ENCODE measurements at regions of chr10 and their contacts with region 1.

Region 1: DNA sequence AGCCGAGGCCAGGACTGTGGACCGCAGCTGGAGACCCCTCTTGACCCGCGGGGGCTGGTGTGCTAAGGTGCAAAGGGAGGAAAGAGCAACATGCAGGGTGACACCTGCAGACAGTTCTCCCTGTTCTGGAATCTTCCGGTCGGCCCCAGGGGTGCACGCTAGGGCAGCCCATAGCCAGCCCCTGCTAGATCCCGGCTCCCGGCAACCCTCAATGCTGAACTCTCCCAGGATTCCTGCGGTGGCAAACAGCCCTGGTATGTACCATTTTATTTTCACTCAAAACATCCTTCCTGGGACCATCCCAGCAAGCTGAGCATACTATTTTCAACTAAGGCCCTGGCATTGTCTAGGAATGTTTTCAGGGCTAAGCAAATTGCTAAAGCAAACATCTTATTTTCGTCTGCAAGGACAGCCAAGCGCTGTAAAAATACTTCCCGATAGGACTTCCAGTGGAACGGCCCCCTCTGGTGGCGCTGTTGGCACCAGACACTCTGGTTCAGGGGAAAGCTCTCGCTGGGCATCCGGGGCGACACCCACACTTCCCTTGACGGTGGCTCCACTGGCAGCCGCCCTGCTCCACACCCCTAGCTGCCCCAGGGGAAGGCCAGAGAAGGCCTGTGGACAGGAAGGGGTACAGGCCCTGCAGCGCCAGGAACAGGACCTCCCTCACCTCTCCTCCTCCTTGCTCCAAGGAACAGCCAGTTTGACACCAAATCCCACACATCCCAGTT is 99.4 kb downstream of the CTBP2 start:
- DNase-seq: peak; percentile 84 to 91 (median 87)
- ATAC-seq: peak; percentile 39 to 71 (median 67)
- H3K4me3 ChIP-seq: peak overlapping the region in 8 of 12 donors; percentile 12 to 38 (median 25)
- H3K27ac ChIP-seq: peak overlapping the region; percentile 19 to 90 (median 70)
- H3K4me1 ChIP-seq: peaks cover 27 to 100% (median 98%) of the 10 kb centered on the region in 12 donors
- H3K27me3 ChIP-seq: no peaks in the 10 kb centered on the region
- CTCF ChIP-seq: peak; percentile 77 to 95 (median 88)
- POLR2A ChIP-seq: no peak

Region 2: GRCh38 chr10:124916585-124917427 is 144.2 kb before region 1 on chr10:
- intact Hi-C with region 1: loop called in 1 of 10 experiments (anchors 10 kb)
- DNase-seq: peak; percentile 99 to 100 (median 99)
- ATAC-seq: peak; percentile 98 to 99 (median 98)
- H3K4me3 ChIP-seq: peak overlapping the region; percentile 80 to 97 (median 88)
- H3K27ac ChIP-seq: peak overlapping the region; percentile 92 to 99 (median 96)
- H3K4me1 ChIP-seq: peaks cover 5 to 52% (median 40%) of the 10 kb centered on the region in 12 donors
- H3K27me3 ChIP-seq: no peaks in the 10 kb centered on the region
- CTCF ChIP-seq: peak in 1 of 12 donors; percentile 5
- POLR2A ChIP-seq: peak; percentile 85 to 98

Region 3: GRCh38 chr10:125000366-125001312 is 60.4 kb before region 1 on chr10:
- intact Hi-C with region 1: loop called in 3 of 10 experiments (anchors 5 to 10 kb)
- DNase-seq: peak in 2 of 5 donors; percentile 8 to 52
- ATAC-seq: peak; percentile 27 to 51 (median 34)
- H3K4me3 ChIP-seq: no peak overlapping the region
- H3K27ac ChIP-seq: peak overlapping the region in 11 of 12 donors; percentile 24 to 86 (median 62)
- H3K4me1 ChIP-seq: peaks cover 0 to 67% (median 43%) of the 10 kb centered on the region in 12 donors
- H3K27me3 ChIP-seq: no peaks in the 10 kb centered on the region
- CTCF ChIP-seq: peak in 8 of 12 donors; percentile 8 to 41 (median 26)
- POLR2A ChIP-seq: no peak

Region 4: DNA sequence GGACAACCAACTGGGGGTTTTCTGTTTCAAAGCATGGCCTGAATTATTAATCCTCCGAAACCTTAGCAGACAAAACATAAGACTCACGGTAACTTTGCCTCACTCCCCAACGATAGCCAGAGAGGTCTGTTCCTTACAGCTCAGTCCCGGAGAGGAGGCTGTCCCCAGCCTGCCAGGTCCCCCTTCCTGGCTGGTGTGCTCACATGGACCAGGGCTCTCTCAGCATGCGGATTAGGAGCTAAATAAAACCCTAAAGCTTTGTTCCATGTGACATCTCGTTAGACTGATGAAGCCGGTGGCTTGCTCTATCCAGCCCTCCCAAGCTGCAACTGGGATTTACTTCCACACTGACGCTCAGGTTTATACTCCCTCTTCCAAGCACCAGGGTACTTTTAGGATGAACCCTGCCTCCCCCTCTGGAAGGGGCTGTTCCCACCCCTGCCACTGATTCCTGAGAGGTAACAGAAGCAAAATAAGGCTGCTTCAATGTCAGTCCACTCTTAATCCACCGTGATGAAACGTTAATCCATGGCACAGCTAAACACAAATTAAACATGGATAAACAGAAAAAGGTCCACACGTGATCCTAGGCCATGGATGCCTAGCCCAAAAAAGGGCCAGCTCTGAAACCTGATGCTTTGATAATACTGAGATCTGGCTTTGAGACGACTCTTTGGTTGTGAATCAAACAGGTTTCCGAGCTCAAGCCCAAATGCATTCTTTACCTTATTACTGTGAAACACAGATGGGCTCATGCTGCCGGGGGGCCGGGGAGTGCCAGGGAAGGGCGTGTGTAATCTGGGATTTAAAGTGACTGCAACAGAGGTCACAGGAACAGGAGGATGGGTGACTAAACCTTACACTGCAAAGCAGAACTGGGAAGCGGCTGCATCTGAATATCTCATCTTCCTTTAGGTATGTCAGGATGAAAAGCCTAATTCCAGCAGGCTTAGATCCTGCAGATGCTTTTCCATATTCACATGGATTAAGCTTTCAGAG is 32.8 kb before region 1 on chr10:
- intact Hi-C with region 1: no loop called
- DNase-seq: peak in 3 of 5 donors; percentile 48 to 68 (median 67)
- ATAC-seq: peak; percentile 74 to 84 (median 76)
- H3K4me3 ChIP-seq: no peak overlapping the region
- H3K27ac ChIP-seq: peak overlapping the region in 10 of 12 donors; percentile 6 to 79 (median 50)
- H3K4me1 ChIP-seq: peaks cover 3 to 70% (median 29%) of the 10 kb centered on the region in 12 donors
- H3K27me3 ChIP-seq: no peaks in the 10 kb centered on the region
- CTCF ChIP-seq: no peak
- POLR2A ChIP-seq: no peak

Region 5: DNA sequence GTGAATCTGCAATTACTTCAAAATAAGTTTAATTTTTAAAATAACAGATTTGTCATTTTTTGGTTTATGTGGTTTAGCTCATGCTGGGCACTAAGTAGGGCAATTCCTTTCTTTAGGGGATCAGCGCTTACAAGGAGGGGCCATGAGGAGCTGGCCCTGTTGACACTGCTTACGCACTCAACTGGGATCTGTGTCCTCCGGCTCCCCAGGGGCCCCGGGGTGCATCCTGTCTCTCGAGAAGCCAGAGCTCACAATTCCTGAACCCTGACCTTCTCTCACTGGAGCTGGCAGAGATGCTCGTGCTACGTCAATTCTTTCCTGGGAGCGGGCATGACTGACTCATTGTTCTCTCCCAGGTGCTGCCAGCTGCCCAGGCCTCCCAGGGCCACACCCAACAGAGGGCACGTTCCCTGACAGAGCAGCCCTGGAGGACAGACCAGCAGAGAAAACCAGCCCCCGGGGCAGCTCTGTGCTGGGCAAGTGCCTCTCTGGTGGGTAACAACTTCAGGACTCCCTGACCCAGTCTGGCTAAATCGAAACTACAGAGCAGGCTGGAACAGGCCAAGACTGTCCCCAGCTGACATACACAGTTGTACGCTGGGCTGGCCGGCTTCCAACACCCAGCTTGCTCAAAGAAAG is 62.6 kb after region 1 on chr10:
- intact Hi-C with region 1: loop called in 1 of 10 experiments (anchors 5 kb)
- DNase-seq: peak; percentile 84 to 95 (median 89)
- ATAC-seq: peak; percentile 76 to 93 (median 88)
- H3K4me3 ChIP-seq: peak overlapping the region in 9 of 12 donors; percentile 6 to 39 (median 26)
- H3K27ac ChIP-seq: peak overlapping the region; percentile 44 to 88 (median 82)
- H3K4me1 ChIP-seq: peaks cover 7 to 98% (median 74%) of the 10 kb centered on the region in 12 donors
- H3K27me3 ChIP-seq: no peaks in the 10 kb centered on the region
- CTCF ChIP-seq: peak in 1 of 12 donors; percentile 19
- POLR2A ChIP-seq: no peak

Region 6: GRCh38 chr10:125152450-125153368 is 91.7 kb after region 1 on chr10:
- intact Hi-C with region 1: loop called in 9 of 10 experiments (anchors 5 to 10 kb)
- DNase-seq: peak; percentile 63 to 86 (median 79)
- ATAC-seq: peak; percentile 78 to 92 (median 84)
- H3K4me3 ChIP-seq: peak overlapping the region in 1 of 12 donors; percentile 21
- H3K27ac ChIP-seq: peak overlapping the region in 11 of 12 donors; percentile 10 to 99 (median 71)
- H3K4me1 ChIP-seq: peaks cover 23 to 99% (median 84%) of the 10 kb centered on the region in 12 donors
- H3K27me3 ChIP-seq: no peaks in the 10 kb centered on the region
- CTCF ChIP-seq: peak in 1 of 12 donors; percentile 5
- POLR2A ChIP-seq: no peak

Region 7: DNA sequence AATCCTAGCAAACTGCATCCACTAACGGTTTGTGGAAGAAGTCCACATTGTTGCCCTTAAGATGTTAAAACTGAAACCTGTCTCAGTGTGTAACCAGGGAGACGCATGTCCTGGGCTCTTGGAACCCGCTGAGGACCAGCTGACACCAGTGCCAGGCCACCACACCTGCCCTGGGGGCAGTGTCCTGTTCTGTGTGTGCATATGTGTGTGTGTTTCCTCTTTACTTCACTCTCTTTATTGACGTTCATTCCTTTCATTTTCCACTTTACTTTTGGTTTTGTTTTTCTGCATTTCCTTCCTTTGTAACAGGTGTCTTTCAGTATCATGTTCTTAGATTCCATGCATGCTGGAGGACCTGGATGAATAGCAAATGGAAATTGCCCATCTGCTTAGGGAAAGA is 538.2 kb after region 1 on chr10:
- intact Hi-C with region 1: no loop called
- DNase-seq: no peak
- ATAC-seq: no peak
- H3K4me3 ChIP-seq: no peak overlapping the region
- H3K27ac ChIP-seq: no peak overlapping the region
- H3K4me1 ChIP-seq: no peaks in the 10 kb centered on the region
- H3K27me3 ChIP-seq: peaks cover 0 to 10% (median 0%) of the 10 kb centered on the region in 9 donors
- CTCF ChIP-seq: no peak
- POLR2A ChIP-seq: no peak

Region 8: GRCh38 chr10:126135204-126135603 is 1074.2 kb after region 1 on chr10:
- intact Hi-C with region 1: no loop called
- DNase-seq: no peak
- ATAC-seq: no peak
- H3K4me3 ChIP-seq: no peak overlapping the region
- H3K27ac ChIP-seq: no peak overlapping the region
- H3K4me1 ChIP-seq: peaks cover 0 to 42% (median 1%) of the 10 kb centered on the region in 12 donors
- H3K27me3 ChIP-seq: no peaks in the 10 kb centered on the region
- CTCF ChIP-seq: no peak
- POLR2A ChIP-seq: no peak